RWPE1 (cell line): ENCODE measurements at regions of chr12 and their contacts with region 1.

Region 1: DNA sequence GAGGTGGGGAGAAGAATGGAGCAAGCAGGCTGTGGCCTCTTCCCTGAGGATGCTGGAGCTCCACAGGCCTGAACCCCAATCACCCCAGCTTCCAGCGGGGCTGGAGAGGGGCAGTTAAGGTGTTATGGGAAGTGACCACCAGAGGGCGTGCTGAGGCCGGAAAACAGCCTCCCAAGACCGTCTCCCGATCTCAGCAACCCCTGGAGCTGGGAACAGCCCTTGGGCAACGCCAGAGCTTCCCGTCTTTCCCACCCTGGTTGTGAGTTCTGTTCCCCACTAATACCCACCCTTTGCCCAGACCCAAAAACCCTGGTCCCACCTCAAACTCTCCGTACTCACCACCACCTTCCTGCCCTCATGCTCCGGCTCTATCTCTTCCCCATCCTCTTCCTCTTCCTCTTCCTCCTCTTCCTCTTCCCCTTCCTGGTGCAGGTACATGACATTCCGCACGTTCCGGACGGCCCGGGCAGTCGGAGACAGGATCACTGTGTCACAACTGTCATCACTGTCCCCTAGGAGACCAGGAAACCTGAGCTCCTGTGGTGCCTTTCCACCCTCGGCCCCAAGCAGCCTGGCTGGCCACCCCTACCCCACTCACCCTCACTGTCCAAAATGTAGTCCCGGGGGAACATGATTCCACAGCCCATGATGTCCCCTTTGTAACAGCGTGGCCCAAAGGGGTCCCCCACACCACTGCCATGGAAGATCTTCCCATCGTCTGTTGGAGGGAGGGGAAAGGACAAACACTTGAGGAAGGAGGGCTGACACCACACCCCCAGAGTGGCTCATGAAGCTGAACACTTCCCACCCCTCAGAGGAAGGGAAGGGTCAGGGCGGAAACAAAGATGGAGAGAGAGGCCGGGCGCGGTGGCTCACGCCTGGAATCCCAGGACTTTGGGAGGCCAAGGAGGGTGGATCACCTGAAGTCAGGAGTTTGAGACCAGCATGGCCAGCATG is 12.9 kb downstream of the SPRYD3 start:
- DNase-seq: peak; percentile 88
- H3K27ac ChIP-seq: peak overlapping the region; percentile 97
- CTCF ChIP-seq: peak; percentile 78

Region 2: GRCh38 chr12:52799062-52799761 is 267.0 kb before region 1 on chr12:
- CTCF ChIA-PET with region 1: no interaction called
- POLR2A ChIA-PET with region 1: no interaction called
- DNase-seq: peak; percentile 85
- H3K27ac ChIP-seq: no peak overlapping the region
- CTCF ChIP-seq: no peak

Region 3: GRCh38 chr12:53054112-53054833 is 12.0 kb before region 1 on chr12:
- CTCF ChIA-PET with region 1: interaction called, 32 read pairs
- POLR2A ChIA-PET with region 1: no interaction called
- DNase-seq: peak; percentile 94
- H3K27ac ChIP-seq: peak overlapping the region; percentile 99
- CTCF ChIP-seq: no peak

Region 4: GRCh38 chr12:53079226-53080117 is 13.2 kb after region 1 on chr12 and contains the start of gene SPRYD3:
- CTCF ChIA-PET with region 1: interaction called, 37 read pairs
- POLR2A ChIA-PET with region 1: interaction called, 10 read pairs
- DNase-seq: peak; percentile 100
- H3K27ac ChIP-seq: peak within 1 kb of the TSS; percentile 89
- CTCF ChIP-seq: no peak

Region 5: GRCh38 chr12:53098982-53099651 is 32.9 kb after region 1 on chr12:
- CTCF ChIA-PET with region 1: interaction called, 132 read pairs
- POLR2A ChIA-PET with region 1: interaction called, 3 read pairs
- DNase-seq: peak; percentile 98
- H3K27ac ChIP-seq: peak overlapping the region; percentile 100
- CTCF ChIP-seq: peak; percentile 91